B cell (primary cell): ENCODE measurements at regions of chr6 and their contacts with region 1.

Region 1: GRCh38 chr6:161169696-161170095 is 104.2 kb downstream of the AGPAT4 start:
- DNase-seq: no peak
- ATAC-seq: no peak
- H3K4me3 ChIP-seq: peak overlapping the region in 1 of 5 experiments; percentile 15
- H3K4me3 Mint-ChIP-seq: peak overlapping the region; percentile 79
- H3K27ac ChIP-seq: peak overlapping the region in 1 of 2 donors; percentile 39
- H3K27ac Mint-ChIP-seq: peak overlapping the region; percentile 78
- H3K4me1 ChIP-seq: peaks cover 29 to 30% of the 10 kb centered on the region in 2 donors
- H3K4me1 Mint-ChIP-seq: peaks cover 31% of the 10 kb centered on the region
- H3K27me3 ChIP-seq: no peaks in the 10 kb centered on the region
- H3K27me3 Mint-ChIP-seq: no peaks in the 10 kb centered on the region
- CTCF ChIP-seq: no peak

Region 2: GRCh38 chr6:162727309-162728182 is 1557.8 kb after region 1 on chr6 and contains the starts of genes PACRG and PRKN:
- CTCF ChIA-PET with region 1: no interaction called
- POLR2A ChIA-PET with region 1: no interaction called
- intact Hi-C with region 1: loop called (anchors 5 kb)
- DNase-seq: peak; percentile 99
- ATAC-seq: peak; percentile 92
- H3K4me3 ChIP-seq: peak within 1 kb of the TSS; percentile 15 to 87 (median 76)
- H3K4me3 Mint-ChIP-seq: peak within 1 kb of the TSS; percentile 96
- H3K27ac ChIP-seq: peak within 1 kb of the TSS; percentile 59 to 85
- H3K27ac Mint-ChIP-seq: peak within 1 kb of the TSS; percentile 91
- H3K4me1 ChIP-seq: peaks cover 8 to 13% of the 10 kb centered on the region in 2 donors
- H3K4me1 Mint-ChIP-seq: peaks cover 12% of the 10 kb centered on the region
- H3K27me3 ChIP-seq: no peaks in the 10 kb centered on the region
- H3K27me3 Mint-ChIP-seq: no peaks in the 10 kb centered on the region
- CTCF ChIP-seq: no peak
- total RNA-seq, gene PACRG: not detected in 2 replicates
- total RNA-seq, gene PRKN: 6.2 and 6.7 TPM in 2 replicates